Heart right ventricle (tissue), 16 donors: ENCODE measurements at regions of chr20 and their contacts with region 1.

Region 1: GRCh38 chr20:40956542-40957264 is 71.9 kb upstream of the TOP1 start:
- DNase-seq: no peak
- ATAC-seq: peak in 1 of 8 donors; percentile 37
- H3K4me3 ChIP-seq: no peak overlapping the region
- H3K27ac ChIP-seq: no peak overlapping the region
- H3K4me1 ChIP-seq: peaks cover 0 to 10% (median 0%) of the 10 kb centered on the region in 9 donors
- H3K27me3 ChIP-seq: peaks cover 0 to 10% (median 0%) of the 10 kb centered on the region in 7 donors
- CTCF ChIP-seq: no peak

Region 2: DNA sequence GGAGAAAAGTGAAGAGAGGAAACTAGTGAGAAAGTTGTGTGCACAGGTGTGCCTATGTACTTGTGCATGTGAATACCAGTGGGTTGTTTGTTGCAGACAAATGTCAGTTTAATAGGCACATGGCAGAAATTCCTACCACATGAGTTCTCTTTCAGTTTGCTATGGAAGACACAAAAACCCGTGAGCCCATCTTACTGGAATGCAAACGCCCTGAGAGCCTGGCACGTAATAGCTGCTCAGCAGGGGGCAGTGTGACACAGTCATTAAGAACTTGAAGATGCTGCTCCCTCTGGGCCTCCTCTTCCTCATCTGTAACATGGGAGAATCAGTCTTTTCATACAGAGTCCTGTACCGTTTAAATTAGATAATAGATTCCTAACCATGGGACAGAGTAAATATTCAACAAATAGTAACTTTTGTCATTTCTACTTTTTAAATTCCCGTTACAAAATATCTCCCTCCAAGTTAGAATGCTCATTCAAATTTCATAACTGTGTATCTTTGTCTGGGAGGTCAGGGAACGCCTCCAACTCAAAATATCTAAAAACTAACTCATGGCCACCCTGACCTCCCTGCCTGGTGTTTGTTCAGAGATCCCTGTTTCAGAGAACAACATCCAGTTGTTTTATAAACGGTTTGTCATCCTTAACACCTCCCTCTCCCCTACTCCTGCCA is 1070.6 kb before region 1 on chr20:
- intact Hi-C with region 1: loop called in 7 of 10 experiments (anchors 5 to 10 kb)
- DNase-seq: peak; percentile 51 to 69
- ATAC-seq: peak; percentile 61 to 88 (median 82)
- H3K4me3 ChIP-seq: no peak overlapping the region
- H3K27ac ChIP-seq: peak overlapping the region in 2 of 10 donors; percentile 10 to 50
- H3K4me1 ChIP-seq: peaks cover 0 to 11% (median 0%) of the 10 kb centered on the region in 9 donors
- H3K27me3 ChIP-seq: no peaks in the 10 kb centered on the region
- CTCF ChIP-seq: peak; percentile 24 to 71 (median 65)

Region 3: DNA sequence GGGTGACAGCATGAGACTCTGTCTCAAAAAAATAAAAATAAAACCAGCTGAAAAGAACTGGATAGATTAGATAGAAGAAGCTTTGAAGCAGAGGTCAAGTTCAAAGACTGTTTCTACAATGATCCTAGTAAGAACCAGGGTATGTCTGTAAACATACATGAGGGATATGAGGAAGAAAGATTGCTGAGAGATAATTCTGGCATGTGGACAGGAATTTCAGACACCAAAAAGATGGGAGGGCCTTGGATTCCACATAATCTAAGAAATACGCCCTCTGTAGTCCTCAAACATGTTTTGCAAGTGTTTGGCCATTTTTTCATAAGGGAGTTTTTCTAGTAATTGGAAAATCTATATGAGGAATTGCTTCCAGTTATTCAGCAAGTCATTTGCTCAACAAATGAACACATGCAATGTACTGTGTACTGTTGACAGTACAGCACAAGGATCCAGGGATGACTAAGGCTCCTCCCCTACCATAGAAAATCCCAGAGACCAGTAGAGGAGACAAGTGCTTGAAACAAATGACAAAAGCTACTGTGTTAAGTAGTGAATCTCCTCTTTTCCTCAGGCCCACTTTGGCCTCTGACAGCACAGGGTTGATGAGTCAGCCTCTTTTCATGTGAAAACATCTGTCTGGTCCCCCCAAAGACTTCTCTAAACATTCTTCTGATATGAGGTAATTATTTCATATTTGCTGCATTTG is 1063.6 kb before region 1 on chr20:
- intact Hi-C with region 1: loop called in 6 of 10 experiments (anchors 10 kb)
- DNase-seq: no peak
- ATAC-seq: peak in 5 of 8 donors; percentile 18 to 89 (median 64)
- H3K4me3 ChIP-seq: no peak overlapping the region
- H3K27ac ChIP-seq: peak overlapping the region in 2 of 10 donors; percentile 0 to 8
- H3K4me1 ChIP-seq: peaks cover 0 to 6% (median 0%) of the 10 kb centered on the region in 9 donors
- H3K27me3 ChIP-seq: no peaks in the 10 kb centered on the region
- CTCF ChIP-seq: peak in 1 of 9 donors; percentile 10

Region 4: GRCh38 chr20:40806929-40807820 is 149.5 kb before region 1 on chr20:
- intact Hi-C with region 1: loop called in 1 of 10 experiments (anchors 10 kb)
- DNase-seq: no peak
- ATAC-seq: no peak
- H3K4me3 ChIP-seq: no peak overlapping the region
- H3K27ac ChIP-seq: no peak overlapping the region
- H3K4me1 ChIP-seq: no peaks in the 10 kb centered on the region
- H3K27me3 ChIP-seq: peaks cover 0 to 36% (median 17%) of the 10 kb centered on the region in 7 donors
- CTCF ChIP-seq: no peak